ENCODE measurements at regions of chr1 and their contacts with region 1.

Region 1: GRCh38 chr1:45359882-45360513 is 19.8 kb upstream of the MUTYH start:
- DNase-seq: peak in 4 of 5 donors; percentile 38 to 84 (median 55)
- H3K4me3 ChIP-seq: peak overlapping the region in 1 of 3 donors; percentile 1
- H3K27ac ChIP-seq: peak overlapping the region; percentile 19 to 36
- H3K4me1 ChIP-seq: peaks cover 0 to 6% (median 0%) of the 10 kb centered on the region in 3 donors
- H3K27me3 ChIP-seq: no peaks in the 10 kb centered on the region
- CTCF ChIP-seq: peak; percentile 60

Region 2: DNA sequence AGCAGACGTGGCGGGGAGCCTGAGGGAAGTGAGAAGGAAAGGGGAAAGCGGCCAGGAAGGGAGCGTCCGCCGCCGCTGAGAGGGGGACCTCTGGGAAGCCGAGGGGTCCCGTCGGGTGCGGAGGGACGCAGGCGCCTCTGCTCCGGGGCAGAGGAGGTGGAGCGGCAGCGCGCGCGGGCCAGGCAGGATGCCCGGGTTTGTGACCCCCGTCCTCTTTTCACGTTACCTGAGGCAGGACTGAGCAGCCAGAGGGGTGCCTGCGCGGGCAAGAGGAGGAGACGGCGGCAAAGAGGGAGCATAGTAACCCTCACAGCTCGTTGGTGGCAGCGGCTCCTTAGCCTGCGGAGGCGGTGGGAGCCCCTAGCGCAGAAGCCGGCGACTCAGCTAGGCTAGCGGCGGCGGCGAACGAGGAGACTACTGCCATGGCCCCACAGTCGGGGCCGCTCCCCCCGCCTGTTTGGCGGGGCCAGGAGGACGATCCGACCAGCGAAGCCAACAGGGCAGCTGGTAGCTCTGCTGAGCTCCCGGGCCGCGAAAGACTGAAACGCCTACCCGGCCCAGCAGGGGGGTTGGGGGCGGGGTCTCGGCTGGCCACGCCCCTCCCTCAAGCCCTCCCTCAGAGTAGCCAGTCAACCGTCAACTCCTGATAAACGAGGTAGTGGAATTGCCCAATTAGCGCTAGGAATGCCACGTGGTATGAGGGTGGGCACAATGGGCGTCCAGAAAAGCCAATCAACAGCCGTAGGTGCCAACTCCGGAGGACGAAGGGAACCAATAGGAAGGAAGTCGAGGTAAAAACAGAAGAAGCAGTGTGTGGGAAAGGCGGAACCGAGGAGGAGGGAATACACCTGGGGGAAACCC is 130.9 kb after region 1 on chr1 and contains the start of gene TESK2:
- intact Hi-C with region 1: loop called (anchors 5 kb)
- DNase-seq: peak; percentile 97 to 100 (median 99)
- H3K4me3 ChIP-seq: peak within 1 kb of the TSS; percentile 73 to 85 (median 76)
- H3K27ac ChIP-seq: peak within 1 kb of the TSS; percentile 29 to 65
- H3K4me1 ChIP-seq: no peaks in the 10 kb centered on the region
- H3K27me3 ChIP-seq: no peaks in the 10 kb centered on the region
- CTCF ChIP-seq: no peak
- total RNA-seq, gene TESK2: 2.7 TPM

Region 3: GRCh38 chr1:45569962-45570581 is 210.1 kb after region 1 on chr1:
- intact Hi-C with region 1: loop called (anchors 5 kb)
- DNase-seq: peak in 4 of 5 donors; percentile 73 to 83 (median 77)
- H3K4me3 ChIP-seq: no peak overlapping the region
- H3K27ac ChIP-seq: no peak overlapping the region
- H3K4me1 ChIP-seq: peaks cover 0 to 6% (median 0%) of the 10 kb centered on the region in 3 donors
- H3K27me3 ChIP-seq: no peaks in the 10 kb centered on the region
- CTCF ChIP-seq: peak; percentile 99